IMR-90 (cell line): ENCODE measurements at regions of chrX and their contacts with region 1.

Region 1: DNA sequence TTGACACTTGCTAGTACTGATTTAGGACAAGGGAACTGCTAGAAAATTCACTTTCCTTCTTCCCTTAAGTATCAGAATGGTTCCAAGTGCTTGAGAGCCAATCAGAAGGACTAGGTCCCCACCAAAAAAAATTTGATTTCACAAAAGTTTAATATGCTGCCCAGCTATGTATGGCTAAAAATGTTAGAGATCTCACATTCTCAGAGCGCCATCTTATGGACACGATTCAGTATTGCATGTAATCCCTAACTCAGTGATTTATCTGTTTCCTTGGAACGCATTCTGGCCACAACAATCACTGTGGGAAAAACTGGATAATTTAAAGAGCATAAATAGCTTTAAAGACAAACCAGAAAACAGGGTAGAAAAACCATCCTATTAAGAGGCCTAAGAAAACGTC is 255.1 kb upstream of the GPC4 start:
- DNase-seq: peak; percentile 31
- ATAC-seq: peak; percentile 71
- H3K4me3 ChIP-seq: no peak overlapping the region
- H3K27ac ChIP-seq: no peak overlapping the region
- H3K4me1 ChIP-seq: no peaks in the 10 kb centered on the region
- H3K27me3 ChIP-seq: peaks cover 3% of the 10 kb centered on the region
- CTCF ChIP-seq: peak; percentile 76
- POLR2A ChIP-seq: no peak
- RAD21 ChIP-seq: peak; percentile 82

Region 2: GRCh38 chrX:132968296-132968949 is 702.0 kb before region 1 on chrX:
- CTCF ChIA-PET with region 1: no interaction called
- POLR2A ChIA-PET with region 1: no interaction called
- dilution Hi-C with region 1: no loop called
- in situ Hi-C with region 1: loop called (anchors 10 kb)
- intact Hi-C with region 1: no loop called
- DNase-seq: no peak
- ATAC-seq: no peak
- H3K4me3 ChIP-seq: no peak overlapping the region
- H3K27ac ChIP-seq: no peak overlapping the region
- H3K4me1 ChIP-seq: no peaks in the 10 kb centered on the region
- H3K27me3 ChIP-seq: 0 out of 2 replicates have a peak, but pooled peaks cover 2% of the 10 kb centered on the region
- CTCF ChIP-seq: no peak
- POLR2A ChIP-seq: no peak
- RAD21 ChIP-seq: no peak

Region 3: GRCh38 chrX:133005066-133005465 is 665.3 kb before region 1 on chrX:
- CTCF ChIA-PET with region 1: interaction called, 3 read pairs
- POLR2A ChIA-PET with region 1: no interaction called
- dilution Hi-C with region 1: no loop called
- in situ Hi-C with region 1: no loop called
- intact Hi-C with region 1: loop called (anchors 1 kb)
- DNase-seq: peak; percentile 1
- ATAC-seq: no peak
- H3K4me3 ChIP-seq: no peak overlapping the region
- H3K27ac ChIP-seq: no peak overlapping the region
- H3K4me1 ChIP-seq: no peaks in the 10 kb centered on the region
- H3K27me3 ChIP-seq: no peaks in the 10 kb centered on the region
- CTCF ChIP-seq: peak; percentile 52
- POLR2A ChIP-seq: no peak
- RAD21 ChIP-seq: peak; percentile 55

Region 4: DNA sequence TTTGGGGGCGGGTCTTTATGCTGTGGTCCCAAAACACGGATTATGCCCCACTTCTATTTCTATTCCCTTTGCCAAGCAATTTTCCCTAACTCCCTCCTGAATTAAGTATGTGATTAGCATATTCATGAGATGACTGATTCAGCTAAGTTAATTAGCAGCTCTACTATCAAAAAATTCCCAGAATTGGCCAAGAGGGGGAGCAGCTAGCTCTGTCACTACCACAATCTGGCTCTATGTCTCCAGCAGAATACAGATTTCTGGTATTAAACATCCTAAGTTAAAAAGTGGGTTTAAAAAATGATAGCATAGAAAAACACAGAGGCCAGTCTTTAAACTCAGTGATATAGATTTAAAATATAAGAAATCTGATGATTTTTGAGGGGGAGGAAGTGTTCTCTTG is 335.4 kb before region 1 on chrX:
- CTCF ChIA-PET with region 1: interaction called, 11 read pairs
- POLR2A ChIA-PET with region 1: no interaction called
- dilution Hi-C with region 1: no loop called
- in situ Hi-C with region 1: loop called (anchors 10 kb)
- intact Hi-C with region 1: loop called (anchors 1 kb)
- DNase-seq: peak; percentile 26
- ATAC-seq: no peak
- H3K4me3 ChIP-seq: no peak overlapping the region
- H3K27ac ChIP-seq: no peak overlapping the region
- H3K4me1 ChIP-seq: no peaks in the 10 kb centered on the region
- H3K27me3 ChIP-seq: peaks cover 2% of the 10 kb centered on the region
- CTCF ChIP-seq: peak; percentile 55
- POLR2A ChIP-seq: no peak
- RAD21 ChIP-seq: peak; percentile 48

Region 5: DNA sequence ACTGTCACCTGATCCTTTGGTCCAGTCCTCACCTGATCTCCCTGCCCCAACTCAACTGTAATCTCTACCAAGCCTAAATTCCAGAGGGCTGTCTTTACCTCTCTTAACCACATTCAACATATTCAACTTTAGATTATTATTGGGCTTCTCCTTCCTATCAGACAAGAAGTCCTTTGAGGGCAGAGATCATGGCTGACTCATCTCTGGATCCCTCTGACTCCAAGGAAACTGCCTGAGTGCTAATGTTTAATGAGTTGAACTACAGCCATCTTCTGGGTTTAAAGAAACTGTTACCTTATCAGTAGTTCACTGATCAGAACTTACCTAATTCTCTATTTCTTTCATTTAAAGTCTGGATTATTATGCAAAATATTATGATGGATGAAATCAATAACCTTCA is 179.3 kb after region 1 on chrX:
- CTCF ChIA-PET with region 1: no interaction called
- POLR2A ChIA-PET with region 1: no interaction called
- dilution Hi-C with region 1: no loop called
- in situ Hi-C with region 1: no loop called
- intact Hi-C with region 1: no loop called
- DNase-seq: no peak
- ATAC-seq: no peak
- H3K4me3 ChIP-seq: no peak overlapping the region
- H3K27ac ChIP-seq: no peak overlapping the region
- H3K4me1 ChIP-seq: no peaks in the 10 kb centered on the region
- H3K27me3 ChIP-seq: no peaks in the 10 kb centered on the region; the same call in 1 of the 2 replicates
- CTCF ChIP-seq: no peak
- POLR2A ChIP-seq: no peak
- RAD21 ChIP-seq: no peak